CD8-positive, alpha-beta T cell (primary cell): ENCODE measurements at regions of chr19 and their contacts with region 1.

Region 1: DNA sequence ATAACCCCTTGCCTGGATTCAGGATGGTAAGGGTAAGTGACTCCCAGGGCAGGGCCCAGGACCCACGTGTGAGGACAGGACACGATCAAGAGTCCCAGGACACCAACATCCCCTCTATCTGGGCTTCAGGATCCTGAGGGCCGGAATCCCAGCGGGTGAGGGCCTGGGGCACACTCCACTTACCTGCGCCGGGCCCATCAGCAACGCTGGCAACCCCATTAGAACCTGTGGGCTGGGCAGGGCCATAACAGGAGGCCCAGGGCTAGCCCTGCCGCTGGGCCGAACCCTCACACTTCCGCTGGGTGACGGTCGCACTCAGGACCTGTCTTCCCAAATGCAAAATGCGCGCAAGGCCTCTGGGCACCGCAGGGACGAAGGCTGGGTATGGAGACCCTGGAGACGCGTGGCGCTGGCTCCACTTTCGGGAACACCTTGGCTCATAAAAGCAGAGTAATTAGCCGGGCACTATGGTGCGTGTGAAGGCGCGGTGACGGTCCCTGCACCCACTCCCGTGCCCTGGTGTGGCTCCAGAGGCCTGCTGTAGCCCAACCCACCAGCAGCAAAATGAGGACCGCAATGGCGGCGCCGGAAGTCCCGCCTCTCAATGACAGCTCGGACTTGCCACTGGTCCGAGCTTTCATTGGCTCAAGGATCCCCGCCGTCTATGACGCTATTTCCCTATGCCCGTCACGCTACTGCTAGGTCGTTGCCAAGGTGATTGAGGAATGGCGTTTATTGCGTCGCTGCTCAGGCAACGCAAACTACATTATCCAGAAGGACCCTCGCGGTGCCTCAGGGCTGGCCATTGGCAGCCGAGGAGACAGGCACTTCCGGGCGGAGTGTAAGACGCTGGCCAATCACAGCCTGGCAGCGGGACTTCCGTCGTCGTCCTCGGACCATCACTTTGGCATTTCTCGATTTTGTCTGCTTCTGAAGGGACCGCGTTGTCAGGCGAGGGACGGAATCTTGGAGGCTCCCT is at the start of gene ZNF132:
- DNase-seq: peak; percentile 85 to 100 (median 92)
- ATAC-seq: peak; percentile 97
- H3K4me3 ChIP-seq: peak within 1 kb of the TSS; percentile 76 to 81
- H3K4me3 Mint-ChIP-seq: peak within 1 kb of the TSS; percentile 91
- H3K27ac ChIP-seq: peak within 1 kb of the TSS; percentile 70 to 91
- H3K27ac Mint-ChIP-seq: peak within 1 kb of the TSS; percentile 96
- H3K4me1 ChIP-seq: peaks cover 16% of the 10 kb centered on the region
- H3K4me1 Mint-ChIP-seq: peaks cover 29% of the 10 kb centered on the region
- H3K27me3 ChIP-seq: no peaks in the 10 kb centered on the region
- H3K27me3 Mint-ChIP-seq: no peaks in the 10 kb centered on the region
- CTCF ChIP-seq: no peak
- total RNA-seq, gene ZNF132: 0.75 to 1.3 TPM

Region 2: GRCh38 chr19:58278157-58279041 is 161.5 kb before region 1 on chr19 and contains the start of gene ZNF8:
- CTCF ChIA-PET with region 1: no interaction called
- POLR2A ChIA-PET with region 1: no interaction called
- intact Hi-C with region 1: loop called in 1 of 2 experiments (anchors 2 kb)
- DNase-seq: peak; percentile 89 to 99 (median 97)
- ATAC-seq: peak; percentile 97
- H3K4me3 ChIP-seq: peak within 1 kb of the TSS; percentile 67 to 92
- H3K4me3 Mint-ChIP-seq: peak within 1 kb of the TSS; percentile 99
- H3K27ac ChIP-seq: peak within 1 kb of the TSS; percentile 72 to 85
- H3K27ac Mint-ChIP-seq: peak within 1 kb of the TSS; percentile 96
- H3K4me1 ChIP-seq: peaks cover 26% of the 10 kb centered on the region
- H3K4me1 Mint-ChIP-seq: peaks cover 50% of the 10 kb centered on the region
- H3K27me3 ChIP-seq: no peaks in the 10 kb centered on the region
- H3K27me3 Mint-ChIP-seq: no peaks in the 10 kb centered on the region
- CTCF ChIP-seq: no peak
- total RNA-seq, gene ZNF8: 9.2 to 9.5 TPM

Region 3: DNA sequence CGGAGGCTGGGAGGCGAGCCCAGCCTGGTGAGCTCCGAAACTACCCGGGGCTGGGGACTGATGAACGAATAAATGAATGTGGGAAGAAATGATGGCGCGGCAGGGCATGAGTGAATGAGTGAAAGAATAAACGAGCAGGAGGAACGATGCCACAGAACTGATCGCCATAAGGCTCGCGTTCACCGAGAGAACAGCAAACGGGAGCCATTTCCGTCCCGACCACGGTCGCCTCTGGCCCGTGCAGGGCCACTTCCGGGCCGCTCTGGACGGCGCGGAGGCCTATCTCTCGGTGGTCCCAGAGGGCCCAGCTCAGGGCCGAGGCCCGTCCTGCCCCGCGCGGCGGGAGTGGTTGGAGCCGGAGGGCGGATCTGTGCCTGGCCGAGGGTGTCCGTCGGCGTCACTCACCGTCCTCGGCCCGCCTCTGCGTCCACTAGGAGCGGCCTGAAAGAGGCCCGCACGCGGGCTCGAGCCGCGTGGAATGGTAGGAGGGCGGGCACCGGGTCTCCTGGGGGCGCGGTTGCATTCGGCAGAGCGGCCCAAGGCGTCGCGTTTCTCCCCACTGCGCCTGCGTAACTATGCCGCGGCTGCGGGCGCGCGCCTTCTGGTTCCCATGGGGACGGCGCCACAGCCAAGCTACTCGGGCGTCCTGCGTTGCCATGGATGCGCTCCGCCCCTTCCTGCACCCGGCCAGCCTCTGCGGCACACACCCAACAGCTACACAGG is 77.4 kb before region 1 on chr19 and contains the start of gene ZNF497:
- CTCF ChIA-PET with region 1: no interaction called
- POLR2A ChIA-PET with region 1: interaction called, 6 read pairs
- intact Hi-C with region 1: loop called in 1 of 2 experiments (anchors 2 kb)
- DNase-seq: peak; percentile 95 to 99 (median 97)
- ATAC-seq: peak; percentile 86
- H3K4me3 ChIP-seq: peak within 1 kb of the TSS; percentile 71 to 78
- H3K4me3 Mint-ChIP-seq: peak within 1 kb of the TSS; percentile 95
- H3K27ac ChIP-seq: peak within 1 kb of the TSS; percentile 82 to 84
- H3K27ac Mint-ChIP-seq: peak within 1 kb of the TSS; percentile 92
- H3K4me1 ChIP-seq: peaks cover 18% of the 10 kb centered on the region
- H3K4me1 Mint-ChIP-seq: peaks cover 23% of the 10 kb centered on the region
- H3K27me3 ChIP-seq: no peaks in the 10 kb centered on the region
- H3K27me3 Mint-ChIP-seq: no peaks in the 10 kb centered on the region
- CTCF ChIP-seq: no peak
- total RNA-seq, gene ZNF497: 0.79 to 1.2 TPM

Region 4: DNA sequence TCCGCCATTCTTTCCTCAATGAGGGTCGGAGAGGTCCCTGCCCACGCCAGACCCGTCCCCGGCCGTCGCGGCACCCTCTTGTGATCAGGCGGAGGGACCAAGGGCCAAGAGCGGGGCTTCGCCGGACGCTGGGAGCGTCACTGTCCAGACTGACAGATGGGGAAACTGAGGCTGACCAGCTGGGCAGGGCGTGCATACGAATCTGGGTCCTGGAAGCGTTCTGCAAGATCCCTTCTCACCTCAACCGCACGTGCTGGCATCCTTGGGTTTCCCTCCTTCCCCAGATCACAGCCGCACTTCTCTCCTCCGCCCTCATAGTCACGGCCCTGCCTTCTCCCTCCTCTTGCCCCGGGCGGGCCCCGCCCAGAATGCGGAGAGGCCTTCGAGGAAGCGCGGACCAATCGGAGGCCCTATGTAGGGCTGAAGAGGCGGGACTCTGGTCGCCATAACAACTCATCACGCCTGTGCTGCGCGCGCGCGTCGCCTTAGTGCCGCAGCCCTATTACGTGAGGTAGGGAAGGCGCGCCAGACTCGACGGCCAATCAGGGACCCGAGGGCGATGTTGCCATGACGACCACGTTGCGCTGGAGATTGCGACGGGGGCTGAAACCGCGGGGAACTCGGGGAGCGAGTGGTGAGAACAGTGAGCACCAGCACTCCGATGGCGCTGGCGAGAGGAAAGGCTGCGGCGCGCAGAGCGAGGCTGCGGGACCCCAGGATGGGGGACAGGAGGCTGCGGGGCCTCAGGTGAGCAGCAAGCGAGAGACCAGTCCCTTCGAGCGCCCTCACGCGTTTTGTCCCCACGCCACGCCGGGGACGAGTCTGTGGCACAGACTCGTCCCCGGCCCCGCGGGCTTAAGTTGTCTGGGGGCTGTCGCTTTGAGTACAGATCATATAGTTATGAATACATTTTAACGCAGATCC is 38.7 kb before region 1 on chr19:
- CTCF ChIA-PET with region 1: no interaction called
- POLR2A ChIA-PET with region 1: no interaction called
- intact Hi-C with region 1: loop called (anchors 1 kb)
- DNase-seq: peak; percentile 97 to 100 (median 99)
- ATAC-seq: peak; percentile 97
- H3K4me3 ChIP-seq: peak overlapping the region; percentile 72 to 77
- H3K4me3 Mint-ChIP-seq: peak overlapping the region; percentile 93
- H3K27ac ChIP-seq: peak overlapping the region; percentile 93 to 94
- H3K27ac Mint-ChIP-seq: peak overlapping the region; percentile 96
- H3K4me1 ChIP-seq: peaks cover 12% of the 10 kb centered on the region
- H3K4me1 Mint-ChIP-seq: peaks cover 15% of the 10 kb centered on the region
- H3K27me3 ChIP-seq: peaks cover 0 to 4% of the 10 kb centered on the region in 2 experiments
- H3K27me3 Mint-ChIP-seq: peaks cover 10% of the 10 kb centered on the region
- CTCF ChIP-seq: no peak

Region 5: DNA sequence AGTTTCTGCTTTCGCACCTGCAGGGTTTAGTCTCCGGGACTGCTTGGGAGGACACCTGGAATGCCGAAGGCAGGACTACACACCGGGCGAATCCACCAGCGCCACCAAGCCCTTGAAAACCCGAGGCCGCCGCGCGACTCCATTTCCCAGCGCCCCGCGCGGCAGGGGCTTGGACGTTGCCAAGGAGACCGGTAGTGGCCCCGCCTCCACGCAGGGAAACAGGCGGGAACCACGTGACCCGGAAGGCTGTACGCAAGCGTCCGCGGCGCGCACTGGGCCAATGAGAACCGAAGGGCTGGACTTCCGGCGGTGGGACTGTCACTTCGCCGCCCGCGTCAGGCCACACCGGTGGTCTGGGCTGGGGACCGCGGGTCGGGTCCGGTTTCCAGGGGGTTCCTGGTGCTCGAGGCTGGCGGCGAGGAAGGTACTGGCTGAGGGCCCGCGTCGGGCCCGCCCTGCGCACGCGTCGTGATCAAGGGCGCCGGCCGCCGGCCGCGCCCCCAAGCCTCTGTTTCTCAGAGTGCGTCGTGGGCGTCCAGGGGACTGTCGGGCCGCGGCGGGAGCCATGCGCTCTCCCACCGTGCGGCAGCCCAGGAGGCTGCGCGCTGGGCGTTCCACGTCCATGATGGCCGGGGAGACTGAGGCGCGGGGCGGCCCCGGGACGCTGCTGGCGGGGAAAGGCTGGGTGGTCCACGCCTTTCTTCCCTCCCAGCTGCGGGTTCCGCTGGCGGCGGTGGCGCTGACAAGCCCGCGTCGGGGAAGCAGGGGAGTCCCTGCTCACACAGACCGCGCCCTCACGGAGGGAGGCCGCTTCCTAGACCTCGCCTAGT is 27.1 kb after region 1 on chr19 and contains the start of gene ZNF324:
- CTCF ChIA-PET with region 1: no interaction called
- POLR2A ChIA-PET with region 1: interaction called, 3 read pairs
- intact Hi-C with region 1: loop called (anchors 1 kb)
- DNase-seq: peak; percentile 93 to 99 (median 98)
- ATAC-seq: peak; percentile 88
- H3K4me3 ChIP-seq: peak within 1 kb of the TSS; percentile 63 to 93
- H3K4me3 Mint-ChIP-seq: peak within 1 kb of the TSS; percentile 87
- H3K27ac ChIP-seq: peak within 1 kb of the TSS; percentile 88 to 91
- H3K27ac Mint-ChIP-seq: peak within 1 kb of the TSS; percentile 89
- H3K4me1 ChIP-seq: peaks cover 10% of the 10 kb centered on the region
- H3K4me1 Mint-ChIP-seq: peaks cover 25% of the 10 kb centered on the region
- H3K27me3 ChIP-seq: peaks cover 0 to 3% of the 10 kb centered on the region in 2 experiments
- H3K27me3 Mint-ChIP-seq: no peaks in the 10 kb centered on the region
- CTCF ChIP-seq: no peak
- total RNA-seq, gene ZNF324: 26.9 to 30.5 TPM

Region 6: DNA sequence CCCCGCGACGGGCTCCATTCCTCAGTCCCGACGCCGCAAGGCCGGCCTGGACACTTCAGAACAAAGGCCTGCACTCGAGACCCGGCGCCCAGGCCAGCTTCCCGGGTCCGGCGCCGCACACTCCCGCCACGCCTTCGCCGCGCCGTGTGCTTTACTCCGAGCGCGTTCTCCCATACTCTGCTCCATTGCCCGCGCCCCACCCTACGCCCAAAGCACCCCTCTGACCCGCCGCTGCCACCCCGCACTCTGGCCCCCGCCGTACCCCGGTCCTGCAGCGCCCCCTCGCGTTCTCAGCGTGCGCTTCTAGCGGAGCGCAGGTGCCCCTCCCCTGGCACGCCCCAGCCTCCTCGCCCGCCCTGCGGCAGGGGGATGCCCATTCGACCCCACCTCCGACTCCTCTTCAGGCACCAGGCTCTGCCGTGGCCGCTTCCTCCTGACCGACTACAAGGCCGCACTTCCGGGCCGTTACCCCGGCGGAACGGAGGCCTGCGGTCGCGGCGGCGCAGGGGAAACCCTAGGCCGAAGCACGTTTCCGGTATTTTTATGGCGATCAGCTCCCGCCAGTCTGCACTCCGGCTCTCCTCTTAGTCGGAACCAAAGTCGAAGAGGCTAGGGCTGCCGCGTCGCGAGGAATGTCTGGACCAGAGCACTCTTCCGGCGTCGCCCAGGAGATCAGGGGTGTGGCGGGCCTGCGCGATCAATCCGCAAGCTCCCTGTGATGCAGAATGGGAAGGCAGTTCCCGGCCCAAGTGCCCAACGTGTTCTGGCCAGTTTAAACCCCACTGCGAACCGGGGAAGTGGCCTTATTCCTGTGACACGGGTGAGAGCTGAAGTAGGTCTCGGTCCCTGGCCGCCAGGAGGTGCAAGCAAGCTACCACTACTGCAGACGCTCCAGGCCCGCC is 79.7 kb after region 1 on chr19 and contains the start of gene ZBTB45:
- CTCF ChIA-PET with region 1: no interaction called
- POLR2A ChIA-PET with region 1: no interaction called
- intact Hi-C with region 1: loop called in 1 of 2 experiments (anchors 1 kb)
- DNase-seq: peak; percentile 73 to 96 (median 87)
- ATAC-seq: peak; percentile 80
- H3K4me3 ChIP-seq: peak within 1 kb of the TSS; percentile 63 to 91
- H3K4me3 Mint-ChIP-seq: peak within 1 kb of the TSS; percentile 95
- H3K27ac ChIP-seq: peak within 1 kb of the TSS; percentile 74 to 90
- H3K27ac Mint-ChIP-seq: peak within 1 kb of the TSS; percentile 97
- H3K4me1 ChIP-seq: peaks cover 23% of the 10 kb centered on the region
- H3K4me1 Mint-ChIP-seq: peaks cover 43% of the 10 kb centered on the region
- H3K27me3 ChIP-seq: no peaks in the 10 kb centered on the region
- H3K27me3 Mint-ChIP-seq: no peaks in the 10 kb centered on the region
- CTCF ChIP-seq: peak; percentile 57
- total RNA-seq, gene ZBTB45: 4.8 to 5.6 TPM